MCF 10A (cell line): ENCODE measurements at regions of chr1 and their contacts with region 1.

Region 1: DNA sequence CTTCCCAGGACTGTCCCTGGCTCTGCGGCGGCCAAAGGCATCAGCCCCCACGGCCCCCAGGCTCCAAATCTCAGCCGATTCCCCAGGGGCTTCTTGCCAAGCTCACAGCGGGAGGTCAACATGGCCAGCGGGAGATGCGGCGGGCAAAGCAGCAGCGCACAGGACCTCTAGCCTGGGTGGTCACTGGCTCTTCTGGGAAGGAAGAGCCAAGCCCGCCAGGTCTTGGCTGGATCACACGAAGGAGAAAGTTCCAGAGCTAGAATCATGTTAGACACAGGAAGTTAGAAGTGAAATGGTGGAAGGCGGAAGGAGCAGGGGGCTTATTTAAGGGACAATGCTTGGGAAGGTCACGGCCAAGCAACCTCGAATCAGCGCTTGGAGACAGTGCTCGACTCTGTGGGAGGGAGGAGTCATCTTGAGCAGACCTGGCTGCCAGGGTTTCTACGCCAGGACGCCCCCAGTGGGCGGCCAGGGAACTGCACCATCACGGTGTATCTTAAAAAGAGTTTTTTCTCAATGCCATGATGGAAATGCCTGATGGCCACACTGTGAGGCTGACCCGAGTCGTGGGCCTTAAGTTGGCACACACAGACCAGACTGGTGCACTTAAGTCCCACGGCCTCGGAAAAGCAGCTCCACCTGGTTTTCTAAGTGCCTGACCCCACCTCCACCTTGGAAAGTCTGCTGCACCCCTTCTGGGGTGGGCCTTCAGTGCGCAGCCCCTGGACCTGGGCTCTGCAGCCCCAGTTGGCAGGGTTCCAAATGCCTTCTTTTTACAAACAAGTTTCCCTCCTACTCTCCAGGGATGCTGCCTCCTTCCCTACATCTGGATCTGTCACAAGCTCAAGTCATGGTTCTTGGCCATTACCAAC is 29.3 kb downstream of the SLC66A1 start:
- DNase-seq: peak; percentile 67
- H3K4me3 Mint-ChIP-seq: no peak overlapping the region
- H3K27ac Mint-ChIP-seq: no peak overlapping the region
- H3K4me1 Mint-ChIP-seq: peaks cover 4% of the 10 kb centered on the region
- H3K27me3 Mint-ChIP-seq: no peaks in the 10 kb centered on the region
- CTCF ChIP-seq: peak; percentile 82

Region 2: DNA sequence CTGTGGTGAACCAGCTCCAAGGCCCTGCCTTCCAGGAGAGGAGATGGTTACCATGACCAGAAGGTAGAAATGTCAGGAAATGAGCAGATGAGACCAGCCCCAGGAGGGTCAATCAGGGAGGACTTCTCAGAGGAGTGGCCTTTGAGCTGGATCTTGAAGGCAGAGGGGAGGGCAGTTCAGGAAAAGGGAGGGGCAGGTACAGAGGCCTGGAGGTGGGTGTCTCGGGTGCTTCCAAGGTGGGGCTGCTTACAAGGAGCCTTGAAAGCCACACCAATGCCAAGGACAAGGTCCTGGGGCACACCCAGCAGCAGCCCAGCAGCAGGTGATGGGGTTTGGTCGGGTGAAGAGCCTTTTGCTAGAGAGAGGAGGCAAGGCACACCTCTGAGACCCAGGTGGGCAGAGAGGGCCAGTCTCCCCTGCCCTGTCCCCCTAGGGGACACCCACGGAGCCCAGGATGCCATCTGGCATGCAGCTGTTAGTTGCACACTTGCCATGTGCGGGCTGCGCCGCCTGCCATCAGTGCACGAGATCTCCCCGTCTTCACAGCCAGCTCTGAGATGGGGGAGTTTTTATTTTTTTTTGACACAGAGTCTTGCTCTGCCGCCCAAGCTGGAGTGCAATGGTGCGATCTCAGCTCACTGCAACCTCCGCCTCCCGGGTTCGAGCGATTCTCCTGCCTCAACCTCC is 10.8 kb before region 1 on chr1:
- CTCF ChIA-PET with region 1: interaction called, 17 read pairs
- POLR2A ChIA-PET with region 1: no interaction called
- intact Hi-C with region 1: no loop called
- DNase-seq: no peak
- H3K4me3 Mint-ChIP-seq: no peak overlapping the region
- H3K27ac Mint-ChIP-seq: no peak overlapping the region
- H3K4me1 Mint-ChIP-seq: no peaks in the 10 kb centered on the region
- H3K27me3 Mint-ChIP-seq: no peaks in the 10 kb centered on the region
- CTCF ChIP-seq: no peak

Region 3: DNA sequence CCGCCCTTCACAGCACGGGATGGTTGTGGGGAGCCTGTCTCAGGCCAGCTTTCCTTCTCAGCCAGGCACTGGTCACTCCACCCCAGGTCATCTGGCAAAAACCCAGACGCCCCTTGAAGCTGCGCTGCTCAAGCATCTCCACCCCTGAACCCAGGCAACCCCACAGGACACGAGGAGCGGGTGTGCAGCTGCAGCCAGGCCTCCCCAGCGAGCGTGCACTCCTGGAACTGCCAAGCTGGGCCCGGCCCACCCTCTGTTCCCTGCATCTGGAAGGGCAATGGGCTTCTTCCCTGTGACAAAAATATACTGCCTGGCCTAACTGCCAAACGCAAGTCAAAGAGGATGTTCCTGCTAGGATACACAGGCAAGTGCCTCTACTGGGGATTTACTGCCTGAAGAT is 10.4 kb after region 1 on chr1:
- CTCF ChIA-PET with region 1: interaction called, 11 read pairs
- POLR2A ChIA-PET with region 1: no interaction called
- intact Hi-C with region 1: no loop called
- DNase-seq: no peak
- H3K4me3 Mint-ChIP-seq: no peak overlapping the region
- H3K27ac Mint-ChIP-seq: no peak overlapping the region
- H3K4me1 Mint-ChIP-seq: no peaks in the 10 kb centered on the region
- H3K27me3 Mint-ChIP-seq: no peaks in the 10 kb centered on the region
- CTCF ChIP-seq: no peak

Region 4: GRCh38 chr1:19424651-19425570 is 83.5 kb after region 1 on chr1:
- CTCF ChIA-PET with region 1: no interaction called
- POLR2A ChIA-PET with region 1: no interaction called
- intact Hi-C with region 1: no loop called
- DNase-seq: peak; percentile 60
- H3K4me3 Mint-ChIP-seq: no peak overlapping the region
- H3K27ac Mint-ChIP-seq: peak overlapping the region; percentile 49
- H3K4me1 Mint-ChIP-seq: peaks cover 44% of the 10 kb centered on the region
- H3K27me3 Mint-ChIP-seq: no peaks in the 10 kb centered on the region
- CTCF ChIP-seq: no peak